ENCODE measurements at regions of chr14 and their contacts with region 1.

Region 1: DNA sequence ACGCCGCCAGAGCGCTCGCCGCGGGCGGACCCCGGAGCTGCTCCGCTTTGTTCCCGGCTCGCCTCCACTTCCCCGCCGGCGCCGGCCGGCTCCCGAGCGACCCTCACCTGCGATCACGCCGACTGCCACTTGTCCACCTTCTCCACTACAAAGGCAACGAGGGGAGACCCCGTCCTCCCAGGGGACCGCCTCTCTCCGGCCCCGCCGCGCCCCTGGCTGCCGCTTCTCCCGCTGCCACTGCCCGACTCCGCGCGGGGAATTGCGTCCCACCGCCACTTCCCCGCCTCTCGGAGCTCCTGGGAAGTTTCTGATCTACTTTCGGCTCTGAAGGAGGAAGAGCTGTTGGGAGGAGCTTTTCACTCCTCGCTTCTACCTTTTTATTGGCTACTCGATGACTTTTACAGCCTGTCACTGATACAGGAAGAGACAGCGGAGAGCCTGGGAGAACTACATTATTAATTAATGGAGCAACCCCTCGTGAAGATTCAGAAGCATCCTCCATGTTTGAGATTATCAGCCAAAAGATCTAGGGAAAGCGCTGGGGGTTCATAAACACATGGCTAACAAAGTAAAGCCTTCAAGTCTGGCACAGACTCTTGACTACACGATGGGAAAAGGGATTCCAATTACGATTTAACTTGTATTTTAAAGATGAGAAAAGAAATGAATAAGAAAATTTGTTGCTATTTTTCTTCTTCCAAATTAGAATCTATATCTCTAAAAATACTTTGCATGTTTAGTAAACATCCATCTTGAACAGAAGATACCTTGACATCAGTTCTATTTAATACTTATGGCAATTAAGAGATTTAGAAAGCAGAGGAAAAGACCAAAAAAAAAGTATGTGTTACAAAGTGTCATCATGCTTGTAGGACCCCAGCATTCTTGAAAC is at the start of gene BAZ1A:
- DNase-seq: peak in 30 of 35 experiments; percentile 1 to 69 (median 13)
- ATAC-seq: peak; percentile 24 to 33 (median 28)
- H3K4me3 ChIP-seq: peak within 1 kb of the TSS; percentile 92 to 94
- H3K4me3 Mint-ChIP-seq: peak within 1 kb of the TSS; percentile 99 to 100 (median 99)
- H3K27ac ChIP-seq: peak within 1 kb of the TSS; percentile 100
- H3K27ac Mint-ChIP-seq: peak within 1 kb of the TSS; percentile 98 to 99
- H3K4me1 ChIP-seq: peaks cover 11 to 19% of the 10 kb centered on the region in 2 experiments
- H3K4me1 Mint-ChIP-seq: peaks cover 33 to 38% (median 37%) of the 10 kb centered on the region in 3 donors
- H3K27me3 ChIP-seq: no peaks in the 10 kb centered on the region
- H3K27me3 Mint-ChIP-seq: no peaks in the 10 kb centered on the region
- total RNA-seq, gene BAZ1A: 38.0 to 56.2 (median 44.6) TPM

Region 2: DNA sequence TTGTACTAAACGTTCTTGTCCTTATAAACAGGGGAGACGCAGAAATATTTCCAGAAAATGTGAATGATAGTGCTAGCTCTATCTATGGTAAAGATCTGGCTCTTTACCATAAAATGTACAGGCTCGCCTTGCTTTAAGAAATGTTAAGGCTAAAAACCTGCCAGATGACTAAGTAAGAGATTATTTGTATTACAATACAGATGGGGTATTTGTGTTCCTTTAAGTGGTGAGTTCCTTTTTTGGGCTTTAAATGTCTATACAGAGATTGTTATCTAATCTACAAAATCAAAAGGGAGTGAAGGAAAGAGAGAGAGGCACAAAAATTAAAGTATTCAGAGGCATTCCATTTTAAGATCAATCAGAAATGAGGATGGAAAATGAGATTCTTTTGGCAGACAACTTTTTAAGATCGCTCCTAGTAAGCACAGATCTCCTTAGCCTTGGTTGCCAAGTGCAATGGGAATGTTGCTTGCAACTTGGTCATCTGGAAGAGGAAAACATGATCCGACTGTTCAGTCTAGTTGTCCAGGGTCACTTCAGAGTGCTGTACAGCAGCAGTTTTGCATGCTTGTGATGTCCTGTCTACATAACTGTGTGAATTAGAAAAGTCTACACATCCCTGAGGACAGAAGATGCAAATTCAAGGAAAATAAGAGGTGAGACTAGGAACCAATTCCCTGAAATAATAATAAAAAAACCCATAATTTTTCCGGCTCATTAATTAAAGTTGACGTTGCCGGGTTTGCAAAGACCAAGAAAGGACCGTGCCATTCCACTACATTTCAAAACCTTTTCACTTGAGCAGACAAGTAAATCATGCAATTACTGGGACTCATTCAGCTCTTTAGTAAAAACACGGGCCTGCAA is 1305.2 kb before region 1 on chr14:
- CTCF ChIA-PET with region 1: no interaction called
- POLR2A ChIA-PET with region 1: no interaction called
- DNase-seq: no peak
- ATAC-seq: no peak
- H3K4me3 ChIP-seq: no peak overlapping the region
- H3K4me3 Mint-ChIP-seq: no peak overlapping the region
- H3K27ac ChIP-seq: no peak overlapping the region
- H3K27ac Mint-ChIP-seq: no peak overlapping the region
- H3K4me1 ChIP-seq: no peaks in the 10 kb centered on the region
- H3K4me1 Mint-ChIP-seq: no peaks in the 10 kb centered on the region
- H3K27me3 ChIP-seq: no peaks in the 10 kb centered on the region
- H3K27me3 Mint-ChIP-seq: peaks cover 0 to 6% of the 10 kb centered on the region in 2 donors

Region 3: DNA sequence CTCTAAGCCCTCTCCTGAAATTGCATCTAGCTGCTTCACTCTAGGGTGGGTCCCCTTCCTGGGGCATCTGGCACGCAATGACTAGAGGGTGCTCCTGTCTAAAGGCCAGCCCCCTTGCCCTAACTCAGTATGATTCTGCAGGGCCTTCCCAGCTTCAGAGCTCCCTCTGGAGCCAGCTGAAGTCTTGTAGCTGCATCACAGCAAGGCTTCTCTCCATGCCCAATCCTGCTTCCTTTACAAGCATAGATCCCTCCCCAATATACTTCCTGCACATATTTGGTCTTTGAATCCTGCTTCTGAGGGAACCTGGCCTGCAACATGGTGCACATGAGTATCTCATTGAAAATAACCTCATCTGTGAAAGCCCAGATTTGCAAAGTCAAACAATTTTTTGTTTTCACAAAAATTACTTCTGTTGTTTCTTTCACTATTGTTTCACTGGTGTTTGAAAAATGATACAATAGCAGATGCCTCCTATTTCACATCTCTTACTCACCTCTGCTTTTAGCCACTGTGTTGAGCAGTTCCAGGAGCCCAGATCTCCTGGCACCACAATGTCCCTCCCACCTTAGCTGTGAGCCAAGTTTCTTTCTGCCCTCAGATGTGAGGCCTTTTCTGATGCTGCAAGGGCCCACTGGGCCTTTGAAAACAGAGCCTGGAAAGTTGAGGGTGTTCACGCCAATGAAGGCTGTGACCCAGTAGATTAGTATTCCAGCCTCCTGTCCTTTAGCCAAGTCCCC is 754.9 kb before region 1 on chr14:
- CTCF ChIA-PET with region 1: no interaction called
- POLR2A ChIA-PET with region 1: no interaction called
- DNase-seq: no peak
- ATAC-seq: no peak
- H3K4me3 ChIP-seq: no peak overlapping the region
- H3K4me3 Mint-ChIP-seq: no peak overlapping the region
- H3K27ac ChIP-seq: no peak overlapping the region
- H3K27ac Mint-ChIP-seq: no peak overlapping the region
- H3K4me1 ChIP-seq: no peaks in the 10 kb centered on the region
- H3K4me1 Mint-ChIP-seq: peaks cover 0 to 15% (median 7%) of the 10 kb centered on the region in 3 donors
- H3K27me3 ChIP-seq: no peaks in the 10 kb centered on the region
- H3K27me3 Mint-ChIP-seq: peaks cover 5 to 8% of the 10 kb centered on the region in 2 donors

Region 4: DNA sequence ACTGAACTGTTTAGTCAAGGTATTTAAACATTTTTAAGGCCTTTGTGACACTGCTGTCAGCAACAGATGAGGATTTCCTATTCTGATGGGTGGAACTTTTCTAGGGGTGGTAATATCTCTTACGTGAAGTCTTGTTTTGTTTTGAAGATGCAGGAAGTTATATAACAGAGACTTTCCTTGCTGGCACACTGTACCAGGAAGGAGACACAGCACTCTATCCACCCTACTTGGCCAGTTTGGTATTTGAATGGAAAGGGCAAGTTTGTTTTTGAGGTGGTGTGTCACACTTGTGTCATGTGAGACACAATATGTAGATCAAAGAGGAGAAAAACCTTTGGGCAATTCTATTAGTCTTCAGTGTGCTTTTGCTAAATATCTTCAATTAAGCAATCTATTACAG is 55.9 kb after region 1 on chr14:
- CTCF ChIA-PET with region 1: interaction called in 1 of 2 experiments, 7 read pairs
- POLR2A ChIA-PET with region 1: interaction called, 6 to 26 read pairs
- DNase-seq: peak; percentile 2 to 79 (median 31)
- ATAC-seq: peak; percentile 87 to 95 (median 92)
- H3K4me3 ChIP-seq: no peak overlapping the region
- H3K4me3 Mint-ChIP-seq: peak overlapping the region; percentile 37 to 79 (median 68)
- H3K27ac ChIP-seq: peak overlapping the region; percentile 95
- H3K27ac Mint-ChIP-seq: peak overlapping the region; percentile 99 to 100
- H3K4me1 ChIP-seq: peaks cover 11 to 26% of the 10 kb centered on the region in 2 experiments
- H3K4me1 Mint-ChIP-seq: peaks cover 28 to 35% (median 34%) of the 10 kb centered on the region in 3 donors
- H3K27me3 ChIP-seq: no peaks in the 10 kb centered on the region
- H3K27me3 Mint-ChIP-seq: no peaks in the 10 kb centered on the region